ENCODE measurements at regions of chr21 and their contacts with region 1.

Region 1: DNA sequence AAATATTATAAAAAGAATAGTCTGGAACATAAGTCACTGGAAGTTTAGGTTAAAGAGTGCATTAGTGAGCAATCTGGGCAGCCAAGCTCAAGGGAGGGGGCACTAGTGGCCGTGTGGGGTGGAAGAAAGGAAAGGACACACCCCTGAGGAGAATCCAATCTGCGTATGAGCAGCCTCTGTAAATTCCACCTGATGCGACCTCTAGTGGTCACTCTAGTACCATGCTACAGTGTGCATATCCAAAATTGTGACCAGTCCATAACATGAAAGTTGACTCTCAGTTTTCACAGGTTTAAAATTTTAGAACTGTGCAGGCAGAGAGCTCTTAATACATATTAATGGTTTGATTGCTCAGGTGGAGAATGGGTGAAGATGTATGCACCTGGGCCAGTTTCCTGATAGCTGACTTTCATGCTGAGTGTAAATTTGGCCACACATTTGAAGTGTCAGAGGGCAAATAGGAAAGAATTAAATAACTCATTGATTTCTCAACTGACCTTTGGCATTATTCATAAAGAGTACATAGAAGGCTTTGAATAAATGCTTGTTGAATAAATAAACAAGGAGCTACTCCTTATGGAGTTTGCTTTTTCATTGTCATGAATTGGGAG is 105.9 kb upstream of the C21orf91 start:
- DNase-seq: no peak
- H3K4me3 ChIP-seq: no peak overlapping the region
- H3K27me3 ChIP-seq: no peaks in the 10 kb centered on the region
- CTCF ChIP-seq: peak; percentile 89

Region 2: DNA sequence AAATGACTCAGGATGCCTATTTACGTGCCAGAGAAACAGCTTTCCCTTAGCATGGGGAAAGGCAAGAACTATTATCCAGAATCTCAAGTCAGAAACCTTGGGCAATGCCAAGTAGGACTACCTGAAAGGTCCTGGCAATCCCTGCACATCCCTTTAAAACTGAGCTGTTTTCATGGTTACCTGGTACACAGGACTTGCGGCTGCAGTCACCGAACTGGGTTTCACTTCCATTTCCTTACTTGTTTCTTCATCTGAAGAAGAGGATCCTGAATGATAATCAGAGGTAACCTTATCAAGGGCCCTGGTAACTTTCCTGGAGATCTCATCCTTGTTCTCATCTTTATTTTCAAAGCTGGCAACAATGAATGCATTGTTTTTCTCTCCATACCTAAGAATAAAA is 326.7 kb before region 1 on chr21:
- CTCF ChIA-PET with region 1: no interaction called
- POLR2A ChIA-PET with region 1: no interaction called
- DNase-seq: no peak
- H3K4me3 ChIP-seq: no peak overlapping the region
- H3K27me3 ChIP-seq: no peaks in the 10 kb centered on the region
- CTCF ChIP-seq: no peak

Region 3: DNA sequence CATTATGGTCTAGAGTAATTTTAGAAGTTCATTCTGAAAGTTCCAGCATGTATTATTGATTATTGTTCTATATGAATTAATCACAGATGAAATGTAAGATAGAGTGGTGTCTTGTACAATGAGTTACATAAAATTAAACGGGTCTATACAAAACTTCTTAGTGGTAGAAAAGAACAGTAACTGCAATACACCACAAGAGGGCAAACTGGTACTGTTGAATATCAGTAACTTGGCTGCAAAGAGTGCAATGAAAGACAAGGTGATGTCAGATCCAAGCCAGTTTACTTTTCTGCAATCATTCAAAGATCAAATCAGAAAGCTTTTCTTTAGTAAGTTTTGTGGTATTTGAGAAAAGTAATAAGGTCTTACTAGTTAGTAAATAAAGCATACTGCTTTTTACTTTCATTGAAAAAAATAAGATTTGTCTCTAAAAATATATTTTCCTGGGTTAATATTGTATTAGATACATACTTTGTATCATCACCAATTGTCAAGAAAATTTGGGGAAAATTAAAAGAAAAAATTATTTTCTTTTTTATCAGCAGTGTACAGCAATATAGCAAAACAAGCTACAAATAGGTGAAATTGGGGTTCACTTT is 246.0 kb before region 1 on chr21:
- CTCF ChIA-PET with region 1: interaction called, 45 read pairs
- POLR2A ChIA-PET with region 1: no interaction called
- DNase-seq: peak; percentile 16
- H3K4me3 ChIP-seq: no peak overlapping the region
- H3K27me3 ChIP-seq: no peaks in the 10 kb centered on the region
- CTCF ChIP-seq: peak; percentile 74

Region 4: DNA sequence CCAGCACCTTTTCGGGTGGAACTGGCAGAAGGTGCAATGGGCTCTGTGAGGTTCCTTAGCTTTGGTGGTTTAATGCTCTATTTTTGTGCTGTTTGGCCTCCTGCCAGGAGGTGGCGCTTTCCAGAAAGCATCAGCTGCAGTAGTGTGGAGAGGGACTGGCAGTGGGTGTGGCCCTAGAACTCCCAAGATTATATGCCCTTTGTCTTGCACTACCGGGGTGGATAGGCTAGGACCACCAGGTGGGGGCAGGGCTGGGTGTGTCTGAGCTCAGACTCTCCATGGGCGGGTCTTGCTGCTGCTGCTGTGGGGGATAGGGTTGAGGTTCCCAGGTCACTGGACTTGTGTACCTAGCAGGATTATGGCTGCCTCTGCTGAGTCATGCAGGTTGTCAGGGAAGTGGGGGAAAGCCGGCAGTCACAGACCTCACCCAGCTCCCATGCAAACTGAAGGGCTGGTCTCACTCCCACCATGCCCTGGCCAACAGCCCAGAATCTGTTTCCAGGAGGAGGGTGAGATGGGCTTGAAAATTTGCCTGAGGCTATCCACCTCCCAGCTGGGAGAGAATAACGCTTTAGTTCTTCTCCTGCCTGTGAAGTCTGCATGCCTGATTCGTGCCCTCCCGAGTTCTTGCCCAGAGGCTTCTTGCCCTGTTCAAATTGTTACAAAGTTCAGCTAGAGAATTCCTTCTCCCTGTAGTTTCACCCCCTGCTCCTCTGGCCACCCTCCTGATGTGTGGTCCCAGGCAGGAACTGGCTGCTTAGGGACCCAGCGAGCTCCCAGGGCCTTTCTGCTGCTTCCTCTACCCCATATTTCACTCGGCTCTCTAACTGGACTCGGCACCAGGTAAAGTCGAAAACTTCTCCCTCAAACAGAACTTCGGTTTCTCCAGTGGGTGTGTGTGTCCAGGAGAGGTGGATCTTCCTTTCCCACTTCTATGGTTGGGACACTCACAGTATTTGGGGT is 235.9 kb before region 1 on chr21:
- CTCF ChIA-PET with region 1: interaction called, 15 read pairs
- POLR2A ChIA-PET with region 1: no interaction called
- DNase-seq: peak; percentile 50
- H3K4me3 ChIP-seq: no peak overlapping the region
- H3K27me3 ChIP-seq: no peaks in the 10 kb centered on the region
- CTCF ChIP-seq: no peak

Region 5: GRCh38 chr21:17903029-17903806 is 21.9 kb before region 1 on chr21:
- CTCF ChIA-PET with region 1: interaction called, 12 read pairs
- POLR2A ChIA-PET with region 1: no interaction called
- DNase-seq: no peak
- H3K4me3 ChIP-seq: no peak overlapping the region
- H3K27me3 ChIP-seq: no peaks in the 10 kb centered on the region
- CTCF ChIP-seq: no peak

Region 6: DNA sequence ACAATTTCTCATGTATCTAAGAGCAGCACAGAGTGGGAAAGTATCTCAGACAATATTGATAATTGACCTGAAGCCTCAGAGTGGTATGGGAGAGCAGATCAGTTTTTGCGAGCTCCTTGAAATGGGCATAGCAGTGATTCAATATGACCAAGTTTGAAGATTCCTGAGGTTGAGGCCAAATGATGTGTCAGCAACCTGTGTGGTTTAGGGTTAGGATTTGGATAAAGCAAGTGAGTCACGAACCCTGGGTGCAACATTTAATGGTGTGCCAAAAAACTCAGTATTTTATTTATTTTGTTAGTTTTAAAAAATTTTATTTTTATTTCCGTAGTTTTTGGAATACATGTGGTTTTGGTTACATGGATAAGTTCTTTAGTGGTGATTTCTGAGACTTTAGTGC is 13.5 kb before region 1 on chr21:
- CTCF ChIA-PET with region 1: interaction called, 19 read pairs
- POLR2A ChIA-PET with region 1: no interaction called
- DNase-seq: peak; percentile 59
- H3K4me3 ChIP-seq: no peak overlapping the region
- H3K27me3 ChIP-seq: no peaks in the 10 kb centered on the region
- CTCF ChIP-seq: no peak

Region 7: DNA sequence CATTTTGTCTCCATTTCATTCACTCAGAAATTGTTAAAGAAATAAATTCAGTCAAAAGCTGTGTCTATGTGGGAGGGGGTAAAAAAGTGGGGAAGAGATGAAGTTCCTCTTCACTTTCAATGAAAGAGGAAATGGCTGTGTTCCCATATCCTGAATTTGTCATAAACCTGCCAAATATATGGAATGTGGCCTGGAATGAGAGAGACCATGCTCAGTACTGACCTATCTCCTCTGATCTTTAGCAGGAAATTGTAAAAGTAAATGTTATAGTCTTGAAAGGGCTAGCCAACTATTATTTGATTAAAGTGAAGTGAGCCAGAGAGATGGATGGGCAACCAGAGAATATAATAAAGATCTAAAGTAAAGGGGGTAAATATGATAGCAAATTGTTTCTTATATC is 24.3 kb after region 1 on chr21:
- CTCF ChIA-PET with region 1: interaction called, 12 read pairs
- POLR2A ChIA-PET with region 1: no interaction called
- DNase-seq: no peak
- H3K4me3 ChIP-seq: no peak overlapping the region
- H3K27me3 ChIP-seq: no peaks in the 10 kb centered on the region
- CTCF ChIP-seq: no peak

Measured in BJ (cell line).